Heart right ventricle (tissue), 16 donors: ENCODE measurements at regions of chr2 and their contacts with region 1.

Region 1: GRCh38 chr2:32314886-32315285 is 37.2 kb downstream of the YIPF4 start:
- DNase-seq: no peak
- ATAC-seq: no peak
- H3K4me3 ChIP-seq: no peak overlapping the region
- H3K27ac ChIP-seq: no peak overlapping the region
- H3K4me1 ChIP-seq: no peaks in the 10 kb centered on the region
- H3K27me3 ChIP-seq: no peaks in the 10 kb centered on the region
- CTCF ChIP-seq: no peak

Region 2: GRCh38 chr2:31365348-31365747 is 949.5 kb before region 1 on chr2:
- intact Hi-C with region 1: loop called in 1 of 10 experiments (anchors 5 kb)
- DNase-seq: no peak
- ATAC-seq: no peak
- H3K4me3 ChIP-seq: no peak overlapping the region
- H3K27ac ChIP-seq: no peak overlapping the region
- H3K4me1 ChIP-seq: no peaks in the 10 kb centered on the region
- H3K27me3 ChIP-seq: peaks cover 0 to 3% (median 0%) of the 10 kb centered on the region in 7 donors
- CTCF ChIP-seq: no peak

Region 3: GRCh38 chr2:32192418-32192817 is 122.5 kb before region 1 on chr2:
- intact Hi-C with region 1: no loop called
- DNase-seq: no peak
- ATAC-seq: no peak
- H3K4me3 ChIP-seq: no peak overlapping the region
- H3K27ac ChIP-seq: no peak overlapping the region
- H3K4me1 ChIP-seq: no peaks in the 10 kb centered on the region
- H3K27me3 ChIP-seq: no peaks in the 10 kb centered on the region
- CTCF ChIP-seq: no peak